ENCODE measurements at regions of chr5 and their contacts with region 1.

Region 1: GRCh38 chr5:56056875-56057274 is 62.1 kb upstream of the IL6ST start:
- DNase-seq: no peak
- H3K4me3 ChIP-seq: no peak overlapping the region
- H3K27ac ChIP-seq: no peak overlapping the region
- H3K4me1 ChIP-seq: peaks cover 17% of the 10 kb centered on the region
- H3K27me3 ChIP-seq: no peaks in the 10 kb centered on the region
- CTCF ChIP-seq: no peak

Region 2: DNA sequence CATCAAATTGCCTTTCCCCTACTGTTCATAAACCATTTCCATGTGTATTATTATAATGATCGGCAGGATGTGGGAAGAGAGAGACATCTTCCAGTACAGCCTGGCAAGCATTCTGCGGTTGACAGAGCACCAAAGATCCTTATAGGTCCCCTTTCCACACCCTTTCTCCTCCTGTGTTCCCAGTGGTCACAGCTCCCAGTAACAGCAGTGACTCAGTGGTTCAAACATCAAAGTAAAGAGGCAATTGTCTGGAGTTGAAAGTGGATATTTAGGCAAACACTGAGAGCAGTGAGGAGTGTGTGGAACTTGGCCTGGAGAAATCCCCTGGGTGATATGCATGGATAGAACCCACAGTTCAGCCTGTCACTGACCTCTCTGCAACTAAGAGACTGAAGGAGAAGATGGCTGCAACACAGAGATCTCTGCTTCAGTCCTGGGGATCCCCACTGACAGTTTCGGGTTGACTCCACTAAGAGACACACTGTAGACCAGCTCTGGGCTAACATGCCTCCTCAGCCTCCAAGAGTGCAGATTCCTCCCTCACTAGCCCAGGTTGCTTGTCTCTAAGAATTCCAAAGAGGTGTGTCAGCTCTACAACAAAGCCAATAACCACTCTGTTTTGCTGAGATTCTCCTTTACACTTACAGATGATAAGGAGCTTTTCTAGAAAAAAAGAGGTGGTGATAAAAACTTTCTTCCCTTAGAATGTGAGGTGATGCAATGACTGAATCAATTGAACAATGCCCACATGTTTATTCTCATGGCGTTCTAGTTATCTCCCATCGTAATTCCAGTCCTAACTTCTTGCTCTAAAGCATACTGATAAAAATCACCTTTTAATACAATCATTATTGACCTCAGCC is 32.3 kb after region 1 on chr5:
- CTCF ChIA-PET with region 1: interaction called, 17 read pairs
- POLR2A ChIA-PET with region 1: no interaction called
- intact Hi-C with region 1: no loop called
- DNase-seq: peak; percentile 40 to 82
- H3K4me3 ChIP-seq: no peak overlapping the region
- H3K27ac ChIP-seq: peak overlapping the region; percentile 80
- H3K4me1 ChIP-seq: peaks cover 24% of the 10 kb centered on the region
- H3K27me3 ChIP-seq: no peaks in the 10 kb centered on the region
- CTCF ChIP-seq: no peak

Measured in PC-9 (cell line).